K562 (cell line): ENCODE measurements at regions of chr1 and their contacts with region 1.

Region 1: GRCh38 chr1:175167861-175168260 is 24.7 kb downstream of the KIAA0040 start:
- DNase-seq: no peak
- ATAC-seq: no peak
- H3K4me3 ChIP-seq: no peak overlapping the region
- H3K27ac ChIP-seq: no peak overlapping the region
- H3K4me1 ChIP-seq: peaks cover 5 to 11% of the 10 kb centered on the region in 2 experiments; a peak in 3 of 5 replicates
- H3K27me3 ChIP-seq: no peaks in the 10 kb centered on the region
- CTCF ChIP-seq: no peak
- EP300 ChIP-seq: no peak
- POLR2A ChIP-seq: no peak
- RAD21 ChIP-seq: no peak

Region 2: GRCh38 chr1:175211656-175212055 is 43.8 kb after region 1 on chr1:
- CTCF ChIA-PET with region 1: no interaction called
- POLR2A ChIA-PET with region 1: no interaction called
- in situ Hi-C with region 1: no loop called
- intact Hi-C with region 1: loop called (anchors 2 kb)
- DNase-seq: no peak
- ATAC-seq: no peak
- H3K4me3 ChIP-seq: no peak overlapping the region
- H3K27ac ChIP-seq: no peak overlapping the region
- H3K4me1 ChIP-seq: peaks cover 0 to 14% of the 10 kb centered on the region in 2 experiments; a peak in 3 of 5 replicates
- H3K27me3 ChIP-seq: no peaks in the 10 kb centered on the region
- CTCF ChIP-seq: no peak
- EP300 ChIP-seq: no peak
- POLR2A ChIP-seq: no peak
- RAD21 ChIP-seq: no peak